ENCODE measurements at regions of chr1 and their contacts with region 1.

Region 1: GRCh38 chr1:173570370-173571007 is 32.4 kb downstream of the SLC9C2 start:
- DNase-seq: no peak
- CTCF ChIP-seq: no peak

Region 2: GRCh38 chr1:173545688-173546087 is 24.8 kb before region 1 on chr1:
- CTCF ChIA-PET with region 1: no interaction called
- POLR2A ChIA-PET with region 1: no interaction called
- DNase-seq: no peak
- CTCF ChIP-seq: no peak

Region 3: DNA sequence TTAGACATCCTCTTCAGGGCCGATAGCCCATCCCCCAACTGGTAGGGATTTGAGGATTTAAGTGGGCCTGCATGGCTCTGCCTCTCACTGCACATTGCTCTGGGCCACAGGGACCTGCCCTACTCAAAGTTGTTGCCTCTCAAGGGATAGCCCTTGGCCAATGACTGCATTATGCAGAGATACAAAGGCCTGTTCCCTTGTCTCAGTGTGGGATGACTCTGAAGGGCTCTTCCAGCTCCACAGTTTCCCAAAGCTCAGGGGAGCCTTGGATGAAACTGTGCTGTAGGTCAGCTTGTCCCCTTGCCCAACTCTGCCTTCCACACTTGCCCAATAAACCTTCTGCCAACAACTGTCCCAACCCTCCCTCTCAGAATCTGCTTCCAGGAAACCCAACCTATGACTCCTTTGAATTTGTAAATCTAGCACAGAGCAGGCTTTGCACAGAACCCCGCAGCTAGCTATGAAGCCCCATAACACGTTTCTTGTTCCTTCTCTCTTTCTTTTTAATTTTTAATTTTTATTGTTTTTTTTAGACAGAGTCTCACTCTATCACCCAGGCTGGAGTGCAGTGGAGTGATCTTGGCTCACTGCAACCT is 10.1 kb before region 1 on chr1:
- CTCF ChIA-PET with region 1: interaction called, 11 read pairs
- POLR2A ChIA-PET with region 1: no interaction called
- DNase-seq: no peak
- CTCF ChIP-seq: no peak

Measured in GM10248 (cell line).